GM12878 (cell line): ENCODE measurements at regions of chr1 and their contacts with region 1.

Region 1: DNA sequence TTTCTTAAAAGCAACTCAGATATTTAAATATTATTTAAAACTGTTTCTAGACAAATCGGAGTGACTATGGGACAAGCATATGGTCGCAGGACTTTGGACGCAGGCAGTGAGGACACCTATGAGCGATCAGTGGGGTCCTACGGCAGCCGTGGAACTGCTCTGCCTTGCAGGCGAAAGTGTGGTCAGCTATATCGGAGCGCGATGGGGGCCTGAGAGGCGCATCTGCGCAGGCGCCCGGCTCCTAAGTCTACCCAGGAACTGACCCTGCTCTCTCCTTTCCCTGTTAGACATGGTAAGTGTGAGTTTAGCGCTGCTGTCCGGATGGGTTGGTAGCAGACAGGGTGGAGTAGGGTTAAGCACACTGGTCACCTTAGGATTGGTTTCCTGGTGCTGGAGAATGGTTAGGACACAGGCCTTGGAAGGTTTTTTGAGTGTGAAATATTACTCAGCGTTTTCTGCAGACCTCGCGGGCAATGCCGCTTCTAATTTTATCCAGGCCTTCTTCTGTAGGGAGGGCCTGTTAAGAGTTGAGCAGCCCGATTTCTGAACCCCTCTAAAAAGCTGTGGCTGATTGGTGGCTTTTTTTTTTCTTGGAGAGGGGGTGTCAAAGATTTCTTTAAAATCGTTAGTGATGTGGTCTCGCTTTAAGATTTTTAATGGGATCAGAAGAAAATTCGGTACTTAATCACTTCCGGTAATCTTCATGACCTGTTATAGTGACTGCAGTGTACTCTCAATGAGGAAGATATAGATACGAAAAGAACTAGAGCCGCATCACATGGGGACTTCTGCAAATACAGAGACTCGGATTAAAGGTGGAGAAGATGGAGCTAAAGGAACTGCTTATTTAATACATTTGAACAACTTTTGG is at the start of gene RABGGTB:
- DNase-seq: peak; percentile 92
- ATAC-seq: peak; percentile 80
- H3K4me3 ChIP-seq: peak within 1 kb of the TSS; percentile 80
- H3K27ac ChIP-seq: peak within 1 kb of the TSS; percentile 98
- H3K4me1 ChIP-seq: peaks cover 2% of the 10 kb centered on the region; the same call in 1 of the 2 replicates
- H3K27me3 ChIP-seq: no peaks in the 10 kb centered on the region
- CTCF ChIP-seq: no peak
- EP300 ChIP-seq: no peak
- POLR2A ChIP-seq: peak; percentile 100
- RAD21 ChIP-seq: no peak
- polyA plus RNA-seq, gene RABGGTB: 135 to 153 TPM

Region 2: DNA sequence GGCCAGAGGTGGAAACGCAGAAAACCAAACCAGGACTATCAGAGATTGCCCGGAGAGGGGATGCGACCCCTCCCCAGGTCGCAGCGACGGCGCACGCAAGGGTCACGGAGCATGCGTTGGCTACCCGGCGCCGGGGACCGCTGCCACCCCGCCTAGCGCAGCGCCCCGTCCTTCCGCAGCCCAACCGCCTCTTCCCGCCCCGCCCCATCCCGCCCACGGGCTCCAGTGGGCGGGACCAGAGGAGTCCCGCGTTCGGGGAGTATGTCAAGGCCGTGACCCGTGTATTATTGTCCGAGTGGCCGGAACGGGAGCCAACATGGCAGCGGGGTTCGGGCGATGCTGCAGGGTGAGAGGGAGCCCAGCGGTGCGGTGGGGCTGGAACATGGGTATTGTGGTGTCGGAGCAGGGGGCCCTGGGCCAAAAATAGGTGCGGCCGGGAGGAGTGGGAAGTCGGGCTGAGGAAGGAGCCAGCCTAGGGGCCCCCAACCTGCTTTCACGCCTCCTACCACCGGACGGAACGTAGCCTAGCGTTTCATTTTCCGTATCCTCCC is 61.7 kb before region 1 on chr1 and contains the start of gene ACADM:
- CTCF ChIA-PET with region 1: interaction called, 9 read pairs
- POLR2A ChIA-PET with region 1: interaction called, 44 read pairs
- RAD21 ChIA-PET with region 1: interaction called, 16 read pairs
- SMC1A ChIA-PET with region 1: interaction called, 33 read pairs
- in situ Hi-C with region 1: loop called (anchors 5 kb)
- intact Hi-C with region 1: loop called (anchors 1 kb)
- DNase-seq: peak; percentile 53
- ATAC-seq: peak; percentile 91
- H3K4me3 ChIP-seq: peak within 1 kb of the TSS; percentile 70
- H3K27ac ChIP-seq: peak within 1 kb of the TSS; percentile 83
- H3K4me1 ChIP-seq: 0 out of 2 replicates have a peak, but pooled peaks cover 2% of the 10 kb centered on the region
- H3K27me3 ChIP-seq: no peaks in the 10 kb centered on the region
- CTCF ChIP-seq: no peak
- EP300 ChIP-seq: no peak
- POLR2A ChIP-seq: peak; percentile 99
- RAD21 ChIP-seq: no peak
- polyA plus RNA-seq, gene ACADM: 178 to 191 TPM

Region 3: GRCh38 chr1:75884437-75884836 is 98.2 kb after region 1 on chr1:
- CTCF ChIA-PET with region 1: no interaction called
- POLR2A ChIA-PET with region 1: no interaction called
- RAD21 ChIA-PET with region 1: no interaction called
- SMC1A ChIA-PET with region 1: no interaction called
- in situ Hi-C with region 1: no loop called
- intact Hi-C with region 1: no loop called
- DNase-seq: no peak
- ATAC-seq: no peak
- H3K4me3 ChIP-seq: no peak overlapping the region
- H3K27ac ChIP-seq: no peak overlapping the region
- H3K4me1 ChIP-seq: no peaks in the 10 kb centered on the region
- H3K27me3 ChIP-seq: no peaks in the 10 kb centered on the region
- CTCF ChIP-seq: no peak
- EP300 ChIP-seq: no peak
- POLR2A ChIP-seq: no peak
- RAD21 ChIP-seq: no peak